Ascending aorta (tissue), 2 donors: ENCODE measurements at regions of chr7 and their contacts with region 1.

Region 1: DNA sequence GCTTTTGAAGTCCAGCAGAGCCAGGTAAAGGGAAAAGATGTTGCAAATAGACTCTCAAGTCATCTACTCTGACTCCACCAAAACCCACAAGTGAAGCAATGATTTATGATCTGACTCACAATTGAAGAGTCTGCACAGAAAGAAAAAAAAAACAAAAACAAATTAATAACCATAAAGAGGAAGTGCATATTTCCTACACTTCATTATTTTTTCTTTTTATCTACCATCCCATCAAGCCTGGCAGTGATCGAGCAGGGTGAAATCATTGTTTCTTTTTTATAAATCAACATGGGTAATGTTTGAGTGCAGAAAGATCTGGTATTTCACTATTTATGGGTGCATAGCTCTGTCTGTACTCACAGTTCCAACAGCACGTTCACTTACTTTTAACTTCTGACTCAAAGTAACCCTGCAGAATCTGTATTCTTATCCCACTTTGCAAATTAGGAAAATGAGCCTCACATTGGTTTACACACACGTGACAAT is 829.0 kb downstream of the TNS3 start:
- DNase-seq: no peak
- H3K4me3 ChIP-seq: no peak overlapping the region
- H3K27ac ChIP-seq: peak overlapping the region; percentile 83 to 84
- H3K4me1 ChIP-seq: peaks cover 9 to 39% of the 10 kb centered on the region in 2 donors
- H3K27me3 ChIP-seq: no peaks in the 10 kb centered on the region
- CTCF ChIP-seq: no peak

Region 2: DNA sequence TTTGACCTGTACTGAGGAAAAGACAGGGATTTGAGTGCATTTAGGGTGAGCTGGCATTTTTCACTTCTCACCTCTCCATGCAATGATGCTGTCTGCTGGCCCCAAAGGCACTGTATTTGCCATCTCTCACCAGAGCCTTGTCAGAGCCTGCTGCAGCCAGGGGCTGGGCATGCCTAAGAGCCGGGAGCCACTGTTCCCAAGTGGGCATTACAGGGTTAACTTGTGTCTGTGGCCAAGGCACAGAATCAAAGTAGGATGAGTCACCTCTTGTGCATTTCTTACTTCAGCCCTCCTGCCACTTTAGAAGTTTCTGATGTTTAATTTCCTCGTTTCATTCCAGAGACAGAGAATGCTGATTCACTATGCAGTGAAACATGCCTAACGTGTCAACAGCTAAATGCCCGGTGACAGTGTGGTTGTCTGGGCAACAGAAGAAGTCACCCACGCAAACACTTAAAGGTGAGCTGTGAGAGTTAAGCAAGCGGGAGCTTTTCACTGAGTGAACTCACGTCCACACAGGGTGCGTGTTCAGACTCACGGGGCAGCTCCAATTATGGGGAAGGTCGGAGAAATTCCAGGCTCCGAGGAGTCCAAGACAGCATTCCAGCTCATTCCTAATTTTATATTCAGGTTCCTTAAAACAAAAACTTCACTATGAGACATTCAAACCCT is 774.8 kb before region 1 on chr7:
- intact Hi-C with region 1: loop called (anchors 1 kb)
- DNase-seq: peak in 1 of 2 donors; percentile 88
- H3K4me3 ChIP-seq: peak overlapping the region in 1 of 2 donors; percentile 13
- H3K27ac ChIP-seq: peak overlapping the region; percentile 78 to 87
- H3K4me1 ChIP-seq: peaks cover 13 to 31% of the 10 kb centered on the region in 2 donors
- H3K27me3 ChIP-seq: no peaks in the 10 kb centered on the region
- CTCF ChIP-seq: no peak

Region 3: GRCh38 chr7:46145412-46145811 is 607.5 kb before region 1 on chr7:
- intact Hi-C with region 1: loop called (anchors 10 kb)
- DNase-seq: peak in 1 of 2 donors; percentile 75
- H3K4me3 ChIP-seq: no peak overlapping the region
- H3K27ac ChIP-seq: peak overlapping the region; percentile 8 to 9
- H3K4me1 ChIP-seq: peaks cover 9 to 19% of the 10 kb centered on the region in 2 donors
- H3K27me3 ChIP-seq: no peaks in the 10 kb centered on the region
- CTCF ChIP-seq: no peak

Region 4: DNA sequence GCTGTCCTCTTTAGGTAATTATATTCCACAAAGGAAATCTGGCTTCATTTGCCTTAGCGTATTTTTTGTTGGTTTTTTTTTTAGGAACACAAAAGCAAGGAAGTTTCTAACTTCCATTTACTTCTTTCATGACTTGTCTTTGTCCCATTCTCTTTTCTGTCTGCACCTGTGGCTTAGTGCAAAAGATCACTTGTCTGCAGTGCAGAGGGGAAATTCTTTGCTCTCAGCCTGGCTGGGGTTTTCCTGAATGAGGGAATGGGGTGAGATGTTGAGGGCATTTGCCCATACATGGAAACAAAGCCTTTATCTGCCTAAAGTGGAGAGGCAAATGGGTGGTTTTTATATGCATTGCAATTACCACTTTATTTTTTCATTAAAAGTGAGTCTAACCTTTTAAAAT is 470.8 kb before region 1 on chr7:
- intact Hi-C with region 1: loop called (anchors 10 kb)
- DNase-seq: no peak
- H3K4me3 ChIP-seq: no peak overlapping the region
- H3K27ac ChIP-seq: no peak overlapping the region
- H3K4me1 ChIP-seq: no peaks in the 10 kb centered on the region
- H3K27me3 ChIP-seq: no peaks in the 10 kb centered on the region
- CTCF ChIP-seq: no peak

Region 5: GRCh38 chr7:46603780-46604179 is 149.1 kb before region 1 on chr7:
- intact Hi-C with region 1: loop called (anchors 2 kb)
- DNase-seq: peak; percentile 83 to 97
- H3K4me3 ChIP-seq: peak overlapping the region in 1 of 2 donors; percentile 33
- H3K27ac ChIP-seq: peak overlapping the region; percentile 78 to 79
- H3K4me1 ChIP-seq: peaks cover 8 to 10% of the 10 kb centered on the region in 2 donors
- H3K27me3 ChIP-seq: no peaks in the 10 kb centered on the region
- CTCF ChIP-seq: no peak

Region 6: DNA sequence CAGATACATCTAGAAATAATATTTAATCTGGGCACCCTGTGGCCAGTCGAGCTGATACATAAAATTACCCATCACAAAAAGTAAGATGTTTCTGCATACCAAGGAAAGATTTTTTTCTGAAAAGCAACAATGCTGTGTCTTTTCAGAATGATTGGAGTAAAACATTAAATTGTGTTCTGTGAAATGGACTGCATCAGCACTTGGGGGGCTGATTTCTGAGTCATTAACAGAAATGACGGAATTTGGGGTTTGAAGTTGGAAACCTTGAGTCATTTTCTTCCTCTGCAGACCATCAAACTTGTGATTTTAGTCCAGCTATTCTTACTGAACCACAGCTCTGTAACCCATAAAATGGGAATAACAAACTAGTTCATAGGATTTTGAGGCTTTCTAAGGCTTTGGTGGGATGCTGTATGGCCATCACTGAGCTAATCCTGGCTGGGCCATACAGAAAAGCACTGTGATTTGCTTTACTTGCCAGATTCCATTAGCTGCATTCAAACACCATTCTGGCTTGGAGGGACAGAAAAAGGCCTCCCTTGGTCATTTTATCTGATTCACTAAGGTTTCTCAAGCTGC is 92.4 kb before region 1 on chr7:
- intact Hi-C with region 1: no loop called
- DNase-seq: no peak
- H3K4me3 ChIP-seq: no peak overlapping the region
- H3K27ac ChIP-seq: no peak overlapping the region
- H3K4me1 ChIP-seq: no peaks in the 10 kb centered on the region
- H3K27me3 ChIP-seq: no peaks in the 10 kb centered on the region
- CTCF ChIP-seq: no peak

Region 7: GRCh38 chr7:46763348-46763747 is 10.4 kb after region 1 on chr7:
- intact Hi-C with region 1: loop called (anchors 1 kb)
- DNase-seq: no peak
- H3K4me3 ChIP-seq: no peak overlapping the region
- H3K27ac ChIP-seq: peak overlapping the region; percentile 81 to 85
- H3K4me1 ChIP-seq: peaks cover 5 to 18% of the 10 kb centered on the region in 2 donors
- H3K27me3 ChIP-seq: no peaks in the 10 kb centered on the region
- CTCF ChIP-seq: no peak

Region 8: DNA sequence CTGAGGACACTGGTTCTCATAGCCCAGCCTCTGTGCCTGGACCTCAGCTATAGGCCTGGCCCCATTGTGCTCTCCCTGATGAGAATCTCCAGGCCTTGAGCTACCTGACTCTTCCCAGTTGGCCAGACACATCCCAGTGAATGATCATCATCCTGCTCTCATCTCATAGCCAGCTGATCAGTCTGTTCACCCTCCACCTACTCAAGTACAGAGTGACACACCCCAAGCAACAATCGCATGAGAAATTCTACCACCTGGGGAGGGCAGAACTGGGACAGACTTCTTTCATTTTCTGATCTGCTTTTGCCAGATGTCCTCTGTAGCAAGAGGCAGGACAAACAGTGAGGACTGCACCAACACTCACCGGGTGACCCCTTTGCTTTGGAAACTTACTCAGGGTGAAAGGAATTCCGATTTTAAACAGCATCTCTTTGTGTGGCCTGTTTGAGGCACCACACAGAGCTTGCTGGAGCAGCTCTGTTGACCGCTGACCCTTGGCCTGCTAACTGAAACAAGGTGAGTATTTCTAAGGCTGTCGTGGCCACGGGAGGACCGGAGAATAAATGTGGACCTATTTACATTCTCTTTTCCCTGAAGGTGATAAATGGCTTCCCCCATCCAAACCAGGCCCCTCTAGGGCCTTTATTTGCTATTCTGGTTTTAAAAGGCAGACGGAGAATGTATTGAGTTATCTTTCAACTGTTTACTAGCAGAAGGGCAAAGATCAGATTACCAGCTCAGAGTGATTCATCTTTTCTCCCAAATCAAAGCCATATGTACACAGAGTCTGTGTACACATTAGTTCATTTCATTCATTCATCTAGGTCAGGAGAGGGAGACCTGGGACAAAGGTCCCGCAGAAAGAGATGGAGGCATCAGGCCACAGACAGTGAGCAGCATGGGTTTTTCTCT is 1010.4 kb after region 1 on chr7:
- intact Hi-C with region 1: loop called (anchors 10 kb)
- DNase-seq: no peak
- H3K4me3 ChIP-seq: no peak overlapping the region
- H3K27ac ChIP-seq: no peak overlapping the region
- H3K4me1 ChIP-seq: peaks cover 0 to 7% of the 10 kb centered on the region in 2 donors
- H3K27me3 ChIP-seq: no peaks in the 10 kb centered on the region
- CTCF ChIP-seq: no peak